Gastrocnemius medialis (tissue), 4 donors: ENCODE measurements at regions of chr12 and their contacts with region 1.

Region 1: GRCh38 chr12:79045663-79045993 is 181.1 kb downstream of the SYT1 start:
- DNase-seq: no peak
- ATAC-seq: no peak
- H3K4me3 ChIP-seq: no peak overlapping the region
- H3K27ac ChIP-seq: no peak overlapping the region
- H3K4me1 ChIP-seq: no peaks in the 10 kb centered on the region
- H3K27me3 ChIP-seq: no peaks in the 10 kb centered on the region
- CTCF ChIP-seq: no peak
- POLR2A ChIP-seq: no peak

Region 2: DNA sequence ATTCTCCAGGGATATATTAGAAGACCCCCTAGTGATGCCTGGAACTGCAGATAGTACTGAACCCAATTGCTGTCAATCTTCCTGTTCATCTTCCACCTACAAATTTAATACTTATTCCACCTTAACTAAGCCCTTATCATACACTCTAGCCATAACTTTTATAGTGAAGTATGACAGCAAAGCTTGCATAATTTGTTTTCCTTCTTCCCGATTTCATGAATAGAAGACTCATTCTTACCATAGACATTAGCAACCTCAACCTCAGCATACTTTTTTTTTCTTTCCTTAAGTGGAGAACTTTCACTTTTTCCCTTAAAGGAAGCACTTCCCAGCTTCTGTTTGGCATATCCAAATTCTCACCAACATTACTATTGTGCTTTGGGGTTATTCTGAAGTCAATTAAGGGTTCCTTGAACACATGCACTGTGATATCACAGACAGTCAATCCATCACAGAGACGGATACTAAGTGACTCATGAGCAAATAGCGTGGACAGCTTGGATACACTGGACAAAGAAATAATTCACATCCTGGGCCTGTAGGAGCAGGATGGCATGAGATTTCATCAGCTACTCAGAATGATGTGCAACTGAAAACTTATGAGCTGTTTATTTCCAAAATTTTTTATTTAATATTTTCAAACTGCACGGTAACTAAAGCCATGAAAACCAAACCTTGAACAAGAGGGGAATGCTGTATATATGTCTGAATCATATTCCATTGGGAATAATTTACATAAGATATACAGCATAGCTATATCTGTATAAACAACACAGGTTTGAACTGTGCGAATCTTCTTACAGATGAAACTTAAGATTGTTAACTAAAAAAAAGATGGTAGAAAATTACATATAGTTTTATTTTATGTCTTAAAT is 117.2 kb before region 1 on chr12:
- in situ Hi-C with region 1: loop called in 1 of 4 experiments (anchors 25 kb)
- intact Hi-C with region 1: no loop called
- DNase-seq: no peak
- ATAC-seq: no peak
- H3K4me3 ChIP-seq: no peak overlapping the region
- H3K27ac ChIP-seq: no peak overlapping the region
- H3K4me1 ChIP-seq: no peaks in the 10 kb centered on the region
- H3K27me3 ChIP-seq: no peaks in the 10 kb centered on the region
- CTCF ChIP-seq: no peak
- POLR2A ChIP-seq: no peak